Activated B cell treated with CpG ODN at 0.5 μM for 24 hours (primary cell): ENCODE measurements at regions of chr10 and their contacts with region 1.

Region 1: GRCh38 chr10:99276848-99277486 is 41.3 kb upstream of the HPSE2 start:
- DNase-seq: no peak
- ATAC-seq: no peak
- H3K4me3 Mint-ChIP-seq: no peak overlapping the region
- H3K27ac Mint-ChIP-seq: no peak overlapping the region
- H3K4me1 Mint-ChIP-seq: peaks cover 2% of the 10 kb centered on the region
- H3K27me3 Mint-ChIP-seq: peaks cover 12% of the 10 kb centered on the region
- CTCF ChIP-seq: no peak

Region 2: GRCh38 chr10:97914837-97915211 is 1362.1 kb before region 1 on chr10:
- CTCF ChIA-PET with region 1: no interaction called
- POLR2A ChIA-PET with region 1: no interaction called
- intact Hi-C with region 1: loop called (anchors 2 kb)
- DNase-seq: peak; percentile 44
- ATAC-seq: peak; percentile 73
- H3K4me3 Mint-ChIP-seq: no peak overlapping the region
- H3K27ac Mint-ChIP-seq: no peak overlapping the region
- H3K4me1 Mint-ChIP-seq: no peaks in the 10 kb centered on the region
- H3K27me3 Mint-ChIP-seq: peaks cover 19% of the 10 kb centered on the region
- CTCF ChIP-seq: no peak